Uterus (tissue), 4 donors: ENCODE measurements at regions of chr11 and their contacts with region 1.

Region 1: DNA sequence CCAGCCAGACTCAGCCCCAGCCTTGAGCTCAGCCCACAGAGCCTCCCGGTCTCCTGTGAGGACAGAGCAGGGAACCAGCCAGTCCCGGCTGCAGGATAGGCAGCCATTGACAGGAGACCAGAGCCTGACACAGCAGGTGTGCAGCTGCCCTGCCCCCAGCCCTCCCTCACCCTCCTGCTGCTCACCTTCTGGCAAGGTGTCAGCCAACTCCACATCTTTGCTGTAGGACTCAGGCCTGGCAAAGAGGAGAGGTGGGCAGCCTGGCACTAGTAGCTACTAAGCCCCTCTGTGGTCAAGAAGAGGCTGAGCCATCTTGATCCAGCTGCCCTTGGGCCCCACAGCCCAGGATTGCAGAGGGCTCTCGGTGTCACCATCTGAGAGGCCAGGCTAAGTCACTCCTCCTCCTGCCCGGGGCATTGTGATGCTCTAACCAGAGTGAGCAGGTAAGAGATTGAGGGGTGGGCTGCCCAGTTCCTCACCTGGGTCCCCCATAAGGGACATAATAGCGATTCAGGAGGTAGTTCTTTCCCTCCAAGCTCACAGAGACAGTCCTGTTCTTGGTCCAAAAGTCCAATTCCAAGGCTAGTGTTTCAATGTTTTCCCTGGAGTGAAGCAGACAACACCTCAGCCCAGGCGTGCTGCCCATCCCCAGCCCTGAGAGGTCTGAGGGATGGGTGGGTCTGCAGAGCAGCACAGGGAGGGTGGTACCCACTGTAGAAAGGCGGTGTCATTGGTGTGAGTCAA is 18.6 kb downstream of the TREH start:
- DNase-seq: no peak
- H3K4me3 ChIP-seq: no peak overlapping the region
- H3K27ac ChIP-seq: no peak overlapping the region
- H3K4me1 ChIP-seq: peaks cover 0 to 4% of the 10 kb centered on the region in 2 donors
- H3K27me3 ChIP-seq: no peaks in the 10 kb centered on the region
- CTCF ChIP-seq: no peak
- POLR2A ChIP-seq: no peak

Region 2: GRCh38 chr11:118592616-118593367 is 68.1 kb before region 1 on chr11:
- intact Hi-C with region 1: loop called (anchors 10 kb)
- DNase-seq: no peak
- H3K4me3 ChIP-seq: no peak overlapping the region
- H3K27ac ChIP-seq: peak overlapping the region in 1 of 2 donors; percentile 20
- H3K4me1 ChIP-seq: no peaks in the 10 kb centered on the region
- H3K27me3 ChIP-seq: no peaks in the 10 kb centered on the region
- CTCF ChIP-seq: no peak
- POLR2A ChIP-seq: no peak